ENCODE measurements at regions of chr1 and their contacts with region 1.

Region 1: DNA sequence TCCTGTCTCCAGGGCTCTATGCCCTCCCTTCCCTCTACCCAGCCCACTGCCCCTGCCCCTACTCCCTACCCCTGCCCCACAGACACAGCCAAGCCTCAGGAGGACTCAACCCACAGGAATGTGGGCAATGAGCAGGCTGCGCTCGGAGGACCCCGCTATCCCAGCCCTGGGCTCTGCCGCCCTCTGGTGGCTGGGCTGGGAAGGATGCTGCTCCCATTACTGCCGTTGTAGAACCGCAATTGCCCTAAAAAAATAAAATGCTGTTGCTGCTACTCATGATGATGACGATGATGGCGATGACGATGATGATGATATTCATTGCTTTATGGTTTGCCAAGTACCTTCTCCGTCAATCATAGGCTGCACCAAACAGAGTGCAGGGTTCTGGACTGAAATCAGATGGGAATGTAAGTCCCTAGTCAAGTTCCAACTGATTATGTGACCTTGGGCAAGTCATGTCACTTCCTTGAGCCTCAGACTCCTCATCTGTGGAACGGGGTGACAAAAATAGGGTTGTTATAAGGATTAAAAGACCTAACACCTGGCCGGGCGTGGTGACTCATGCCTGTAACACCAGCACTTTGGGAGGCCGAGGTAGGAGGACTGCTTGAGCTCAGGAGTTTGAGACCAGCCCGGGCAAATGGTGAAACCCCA is 24.6 kb downstream of the ARHGEF19 start:
- DNase-seq: peak; percentile 93
- ATAC-seq: peak; percentile 66
- H3K4me3 ChIP-seq: no peak overlapping the region
- H3K27ac ChIP-seq: peak overlapping the region; percentile 86
- H3K4me1 ChIP-seq: peaks cover 64% of the 10 kb centered on the region
- H3K27me3 ChIP-seq: no peaks in the 10 kb centered on the region
- CTCF ChIP-seq: peak; percentile 97

Region 2: DNA sequence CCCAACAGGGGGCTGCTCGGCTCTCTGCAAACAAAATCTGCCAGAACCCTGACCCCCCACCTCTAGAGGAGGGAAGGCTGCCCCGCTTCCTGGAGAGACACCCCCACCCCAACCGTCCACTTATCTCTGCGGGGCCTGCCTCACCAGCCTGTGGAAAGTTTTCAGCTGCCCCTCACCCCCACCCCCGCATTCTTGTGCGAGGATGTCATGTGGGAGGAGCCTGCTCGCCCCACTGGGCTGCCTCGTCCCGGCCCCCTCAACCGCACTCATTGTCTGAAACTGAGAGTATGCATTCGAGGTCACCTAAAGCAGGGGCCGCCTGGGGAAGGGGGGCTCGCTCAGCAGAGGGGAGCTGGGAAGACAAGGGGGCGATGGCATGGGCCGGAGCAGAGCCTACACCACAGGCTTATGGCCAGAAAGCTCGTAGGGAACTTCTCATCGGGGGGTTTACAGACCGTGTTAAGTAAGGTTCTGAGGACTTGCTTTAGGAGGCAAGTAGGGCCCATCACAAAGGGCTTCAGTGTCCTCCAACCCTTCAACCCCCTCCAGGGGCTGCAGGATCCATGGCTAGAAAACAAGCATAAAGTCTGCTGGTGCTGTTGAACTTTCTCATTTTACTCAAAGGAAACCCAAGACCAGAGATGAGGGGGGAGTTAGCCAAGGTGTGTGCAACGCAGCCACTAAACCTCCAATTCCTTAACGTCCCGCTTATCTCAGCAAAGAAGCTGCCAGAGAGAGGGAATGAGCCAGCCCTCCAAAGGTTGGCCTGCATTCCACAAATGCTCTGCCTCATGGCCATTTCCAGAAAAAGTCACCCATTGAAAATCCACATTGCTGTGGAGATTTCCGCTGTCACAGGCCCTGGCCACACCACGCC is 41.4 kb before region 1 on chr1:
- CTCF ChIA-PET with region 1: no interaction called
- POLR2A ChIA-PET with region 1: interaction called, 4 read pairs
- intact Hi-C with region 1: loop called (anchors 5 kb)
- DNase-seq: peak; percentile 89
- ATAC-seq: peak; percentile 11
- H3K4me3 ChIP-seq: peak overlapping the region; percentile 83
- H3K27ac ChIP-seq: peak overlapping the region; percentile 97
- H3K4me1 ChIP-seq: peaks cover 100% of the 10 kb centered on the region
- H3K27me3 ChIP-seq: no peaks in the 10 kb centered on the region
- CTCF ChIP-seq: no peak

Region 3: GRCh38 chr1:16155532-16156410 is 32.1 kb before region 1 on chr1 and contains the start of gene EPHA2:
- CTCF ChIA-PET with region 1: interaction called, 3 read pairs
- POLR2A ChIA-PET with region 1: interaction called, 16 read pairs
- intact Hi-C with region 1: loop called (anchors 1 kb)
- DNase-seq: peak; percentile 97
- ATAC-seq: peak; percentile 41
- H3K4me3 ChIP-seq: peak within 1 kb of the TSS; percentile 83
- H3K27ac ChIP-seq: peak within 1 kb of the TSS; percentile 74
- H3K4me1 ChIP-seq: peaks cover 53% of the 10 kb centered on the region
- H3K27me3 ChIP-seq: no peaks in the 10 kb centered on the region
- CTCF ChIP-seq: no peak
- total RNA-seq, gene EPHA2: 459 and 567 TPM in 2 replicates

Region 4: GRCh38 chr1:16236511-16237342 is 48.9 kb after region 1 on chr1 and contains the start of gene CPLANE2:
- CTCF ChIA-PET with region 1: no interaction called
- POLR2A ChIA-PET with region 1: no interaction called
- intact Hi-C with region 1: loop called (anchors 2 kb)
- DNase-seq: peak; percentile 95
- ATAC-seq: peak; percentile 79
- H3K4me3 ChIP-seq: peak within 1 kb of the TSS; percentile 72
- H3K27ac ChIP-seq: peak within 1 kb of the TSS; percentile 65
- H3K4me1 ChIP-seq: peaks cover 22% of the 10 kb centered on the region
- H3K27me3 ChIP-seq: no peaks in the 10 kb centered on the region
- CTCF ChIP-seq: 0 out of 2 replicates have a peak, but pooled peaks have one; percentile 1
- total RNA-seq, gene CPLANE2: 9.6 and 11.6 TPM in 2 replicates